Endothelial cell of umbilical vein (primary cell): ENCODE measurements at regions of chr16 and their contacts with region 1.

Region 1: GRCh38 chr16:457732-458400 is 32.4 kb downstream of the RAB11FIP3 start:
- DNase-seq: peak; percentile 77
- H3K4me3 ChIP-seq: no peak overlapping the region
- H3K27ac ChIP-seq: peak overlapping the region; percentile 97
- H3K4me1 ChIP-seq: peaks cover 20% of the 10 kb centered on the region
- H3K27me3 ChIP-seq: no peaks in the 10 kb centered on the region
- CTCF ChIP-seq: peak in 1 of 2 donors; percentile 16
- POLR2A ChIP-seq: peak; percentile 36

Region 2: DNA sequence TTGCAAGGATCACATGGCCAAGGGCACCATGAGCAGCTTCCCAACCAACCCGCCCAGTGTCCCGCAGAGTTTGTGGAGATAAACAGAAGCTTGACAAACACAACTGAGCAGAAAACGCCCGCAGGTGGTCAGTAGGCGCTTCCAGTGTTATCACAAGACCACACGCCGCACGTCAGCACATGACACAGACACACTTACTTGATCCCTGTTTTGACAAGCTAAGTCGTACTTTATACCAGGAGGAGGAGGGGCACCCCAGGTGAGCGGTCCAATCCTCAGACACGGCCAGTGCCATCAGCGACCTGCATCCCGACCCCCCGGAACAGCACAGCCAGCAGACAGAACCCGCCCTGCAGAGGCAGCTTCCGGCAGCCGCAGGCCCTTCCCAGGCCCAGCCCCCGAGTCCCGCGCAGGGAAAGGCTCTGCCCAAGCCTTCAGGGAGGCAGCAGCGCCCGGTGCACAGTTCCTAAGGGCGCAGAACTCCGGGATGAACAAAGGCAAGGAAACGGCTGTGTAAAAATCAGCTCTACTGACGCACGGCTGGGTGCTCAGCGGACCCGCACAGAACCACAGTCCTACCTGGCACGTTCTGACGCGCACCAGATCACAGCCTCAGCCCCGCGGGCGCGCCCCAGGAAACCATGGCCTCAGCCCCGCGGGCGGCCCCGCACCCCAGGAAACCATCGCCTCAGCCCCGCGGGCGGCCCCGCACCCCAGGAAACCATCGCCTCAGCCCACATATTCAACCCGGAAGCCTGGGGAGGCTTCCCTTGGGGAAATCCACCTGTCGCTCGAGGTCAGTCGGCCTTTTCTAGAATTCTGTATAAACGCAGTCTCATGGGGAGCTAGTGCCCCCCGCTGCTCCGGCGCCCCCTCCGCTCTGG is 133.2 kb before region 1 on chr16:
- CTCF ChIA-PET with region 1: no interaction called
- POLR2A ChIA-PET with region 1: no interaction called
- dilution Hi-C with region 1: no loop called
- intact Hi-C with region 1: no loop called
- DNase-seq: no peak
- H3K4me3 ChIP-seq: no peak overlapping the region
- H3K27ac ChIP-seq: no peak overlapping the region
- H3K4me1 ChIP-seq: peaks cover 16% of the 10 kb centered on the region
- H3K27me3 ChIP-seq: no peaks in the 10 kb centered on the region
- CTCF ChIP-seq: no peak
- POLR2A ChIP-seq: no peak

Region 3: GRCh38 chr16:477758-478157 is 19.9 kb after region 1 on chr16:
- CTCF ChIA-PET with region 1: no interaction called
- POLR2A ChIA-PET with region 1: interaction called, 4 read pairs
- dilution Hi-C with region 1: no loop called
- intact Hi-C with region 1: loop called (anchors 1 kb)
- DNase-seq: no peak
- H3K4me3 ChIP-seq: no peak overlapping the region
- H3K27ac ChIP-seq: peak overlapping the region; percentile 58
- H3K4me1 ChIP-seq: peaks cover 8% of the 10 kb centered on the region
- H3K27me3 ChIP-seq: no peaks in the 10 kb centered on the region
- CTCF ChIP-seq: no peak
- POLR2A ChIP-seq: peak; percentile 1

Region 4: GRCh38 chr16:578870-579405 is 121.1 kb after region 1 on chr16:
- CTCF ChIA-PET with region 1: no interaction called
- POLR2A ChIA-PET with region 1: no interaction called
- dilution Hi-C with region 1: no loop called
- intact Hi-C with region 1: no loop called
- DNase-seq: peak; percentile 76
- H3K4me3 ChIP-seq: peak overlapping the region in 1 of 3 experiments; percentile 20
- H3K27ac ChIP-seq: no peak overlapping the region
- H3K4me1 ChIP-seq: peaks cover 2% of the 10 kb centered on the region
- H3K27me3 ChIP-seq: no peaks in the 10 kb centered on the region
- CTCF ChIP-seq: peak; percentile 95 to 98
- POLR2A ChIP-seq: no peak

Region 5: DNA sequence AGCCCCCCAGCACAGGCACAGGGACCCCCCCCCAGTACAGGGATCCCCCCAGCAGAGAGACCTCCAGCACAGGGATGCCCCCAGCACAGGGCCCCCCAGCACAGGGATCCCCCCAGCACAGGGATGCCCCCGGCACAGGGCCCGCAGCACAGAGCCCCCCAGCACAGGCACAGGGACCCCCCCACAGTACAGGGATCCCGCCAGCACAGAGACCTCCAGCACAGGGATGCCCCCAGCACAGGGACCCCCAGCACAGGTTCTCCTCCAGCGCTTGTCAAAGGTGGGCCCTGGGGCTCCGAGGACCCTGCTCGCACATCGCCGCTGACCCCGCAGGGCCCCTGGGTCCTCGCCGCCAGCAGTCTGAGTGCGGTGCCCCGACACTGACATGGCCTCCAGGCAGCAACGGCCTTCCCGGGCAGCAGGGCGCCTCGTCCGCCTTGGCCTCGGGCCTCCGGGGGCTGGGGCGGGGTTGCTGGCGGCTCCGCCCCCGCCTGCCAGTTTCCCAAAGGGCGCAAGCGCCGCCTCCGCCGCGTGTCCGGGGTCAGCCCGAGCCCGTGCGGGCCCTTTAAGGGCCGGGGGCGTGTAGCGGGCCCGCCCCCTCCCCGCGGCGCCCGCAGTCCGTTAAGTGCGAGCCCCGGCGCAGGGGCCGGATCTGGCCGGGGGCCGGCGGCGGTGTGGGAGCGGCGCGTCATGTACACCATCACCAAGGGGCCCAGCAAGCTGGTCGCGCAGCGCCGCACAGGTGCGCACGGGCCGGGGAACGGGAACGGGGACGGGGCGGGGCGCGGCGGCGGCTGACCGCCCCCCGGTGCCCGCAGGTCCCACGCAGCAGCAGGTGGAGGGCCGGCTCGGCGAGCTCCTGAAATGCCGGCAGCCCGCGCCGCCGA is 183.7 kb after region 1 on chr16 and contains the start of gene MCRIP2:
- CTCF ChIA-PET with region 1: no interaction called
- POLR2A ChIA-PET with region 1: no interaction called
- dilution Hi-C with region 1: no loop called
- intact Hi-C with region 1: no loop called
- DNase-seq: peak; percentile 62
- H3K4me3 ChIP-seq: peak within 1 kb of the TSS; percentile 32 to 52 (median 36)
- H3K27ac ChIP-seq: no peak within 1 kb of the TSS
- H3K4me1 ChIP-seq: peaks cover 9% of the 10 kb centered on the region
- H3K27me3 ChIP-seq: no peaks in the 10 kb centered on the region
- CTCF ChIP-seq: no peak
- POLR2A ChIP-seq: peak; percentile 63
- total RNA-seq, gene MCRIP2: 12.9 and 17.1 TPM in 2 replicates

Region 6: GRCh38 chr16:660459-661183 is 202.8 kb after region 1 on chr16:
- CTCF ChIA-PET with region 1: no interaction called
- POLR2A ChIA-PET with region 1: no interaction called
- dilution Hi-C with region 1: no loop called
- intact Hi-C with region 1: no loop called
- DNase-seq: peak; percentile 88
- H3K4me3 ChIP-seq: peak overlapping the region in 1 of 3 experiments; percentile 11
- H3K27ac ChIP-seq: no peak overlapping the region
- H3K4me1 ChIP-seq: no peaks in the 10 kb centered on the region
- H3K27me3 ChIP-seq: no peaks in the 10 kb centered on the region
- CTCF ChIP-seq: peak; percentile 38 to 74
- POLR2A ChIP-seq: peak; percentile 56